WTC11 (cell line): ENCODE measurements at regions of chr1 and their contacts with region 1.

Region 1: DNA sequence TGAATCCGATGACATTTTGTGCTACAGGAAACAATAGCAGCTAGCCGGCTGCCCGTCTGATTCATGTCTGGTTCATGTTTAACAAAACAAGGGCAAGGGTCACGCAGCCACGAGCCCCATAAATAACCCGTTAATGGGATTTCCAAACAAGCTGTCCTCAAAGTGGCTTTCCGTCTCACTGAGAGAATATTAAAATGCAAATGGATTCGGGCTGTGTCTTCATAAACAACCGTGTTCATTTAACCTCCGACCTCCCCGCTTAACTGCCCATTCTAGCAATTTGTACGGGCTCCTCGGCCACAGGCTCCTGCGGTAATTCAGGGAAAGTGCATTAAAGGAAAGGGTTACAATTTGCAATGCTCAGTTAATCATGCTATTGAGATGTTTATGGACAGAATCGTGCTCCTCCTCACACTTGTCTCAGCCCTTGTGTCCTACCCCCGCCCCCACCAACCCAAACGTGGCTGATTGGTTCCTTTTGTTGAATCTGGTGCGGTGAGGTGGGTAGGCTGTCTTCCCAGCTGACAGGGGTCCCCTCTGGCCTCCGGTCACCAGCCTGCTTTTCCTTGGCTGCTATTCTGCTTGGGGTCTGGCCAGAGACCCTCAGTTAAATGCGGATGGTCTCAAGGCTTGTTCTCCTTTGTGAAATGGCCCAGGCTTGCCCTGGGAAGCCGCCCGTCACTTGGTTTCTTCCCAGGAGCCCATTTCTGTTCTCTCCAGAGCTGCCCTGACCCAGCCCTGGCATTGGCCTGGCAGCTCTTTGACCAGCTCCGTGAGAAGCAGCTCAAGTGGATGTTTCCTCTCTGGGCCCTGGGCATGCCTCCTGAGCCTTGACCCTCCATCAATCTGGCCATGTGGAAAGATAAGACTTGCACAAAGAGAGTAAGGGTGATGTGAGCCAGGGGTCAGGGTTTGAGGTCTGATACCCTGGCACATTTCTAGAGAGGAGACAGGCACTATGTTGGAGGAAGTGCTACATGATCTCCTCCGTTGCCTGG is 200.7 kb upstream of the POU3F1 start:
- DNase-seq: no peak
- ATAC-seq: no peak
- H3K4me3 Mint-ChIP-seq: no peak overlapping the region
- H3K27ac Mint-ChIP-seq: no peak overlapping the region
- H3K4me1 Mint-ChIP-seq: peaks cover 56% of the 10 kb centered on the region
- H3K27me3 Mint-ChIP-seq: peaks cover 12% of the 10 kb centered on the region
- CTCF ChIP-seq: no peak

Region 2: DNA sequence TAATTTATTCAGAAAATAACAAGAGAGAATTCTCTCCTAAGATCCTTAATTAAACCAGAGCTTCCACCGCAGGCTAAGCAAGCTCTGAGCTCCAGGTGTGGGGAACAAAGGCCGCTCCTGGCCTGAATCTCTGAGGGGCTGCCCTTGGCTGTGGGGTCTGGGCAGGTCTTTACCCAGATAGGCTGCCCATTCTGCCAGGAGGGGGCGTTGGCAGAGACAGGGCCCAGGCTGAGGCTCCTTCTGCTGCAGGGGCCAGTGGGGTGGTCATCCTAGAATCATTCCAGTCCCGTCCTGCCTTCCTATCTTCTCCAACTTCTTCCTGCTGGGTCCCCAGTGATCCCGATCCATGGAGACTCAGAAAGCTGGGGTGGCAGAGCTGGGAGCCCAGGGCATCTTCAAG is 117.8 kb before region 1 on chr1:
- CTCF ChIA-PET with region 1: interaction called, 10 read pairs
- POLR2A ChIA-PET with region 1: no interaction called
- DNase-seq: peak; percentile 51
- ATAC-seq: peak; percentile 72
- H3K4me3 Mint-ChIP-seq: no peak overlapping the region
- H3K27ac Mint-ChIP-seq: no peak overlapping the region
- H3K4me1 Mint-ChIP-seq: peaks cover 35% of the 10 kb centered on the region
- H3K27me3 Mint-ChIP-seq: no peaks in the 10 kb centered on the region; the same call in 1 of the 2 replicates
- CTCF ChIP-seq: no peak